IMR-90 (cell line): ENCODE measurements at regions of chr11 and their contacts with region 1.

Region 1: GRCh38 chr11:69670158-69670845 is 4.9 kb downstream of the LTO1 start:
- DNase-seq: peak; percentile 84
- ATAC-seq: peak; percentile 69
- H3K4me3 ChIP-seq: no peak overlapping the region
- H3K27ac ChIP-seq: no peak overlapping the region
- H3K4me1 ChIP-seq: peaks cover 7% of the 10 kb centered on the region
- H3K27me3 ChIP-seq: no peaks in the 10 kb centered on the region
- CTCF ChIP-seq: peak; percentile 94
- POLR2A ChIP-seq: peak; percentile 63
- RAD21 ChIP-seq: peak; percentile 94

Region 2: GRCh38 chr11:68946465-68947036 is 723.8 kb before region 1 on chr11:
- CTCF ChIA-PET with region 1: no interaction called
- POLR2A ChIA-PET with region 1: no interaction called
- dilution Hi-C with region 1: no loop called
- in situ Hi-C with region 1: loop called (anchors 25 kb)
- intact Hi-C with region 1: no loop called
- DNase-seq: peak; percentile 89
- ATAC-seq: peak; percentile 56
- H3K4me3 ChIP-seq: no peak overlapping the region
- H3K27ac ChIP-seq: peak overlapping the region; percentile 55; the same call in 1 of the 2 replicates
- H3K4me1 ChIP-seq: peaks cover 18% of the 10 kb centered on the region
- H3K27me3 ChIP-seq: no peaks in the 10 kb centered on the region; the same call in 1 of the 2 replicates
- CTCF ChIP-seq: no peak
- POLR2A ChIP-seq: no peak
- RAD21 ChIP-seq: no peak

Region 3: GRCh38 chr11:69321877-69322361 is 348.4 kb before region 1 on chr11:
- CTCF ChIA-PET with region 1: no interaction called
- POLR2A ChIA-PET with region 1: no interaction called
- dilution Hi-C with region 1: no loop called
- in situ Hi-C with region 1: no loop called
- intact Hi-C with region 1: no loop called
- DNase-seq: peak; percentile 96
- ATAC-seq: peak; percentile 74
- H3K4me3 ChIP-seq: no peak overlapping the region
- H3K27ac ChIP-seq: peak overlapping the region; percentile 79
- H3K4me1 ChIP-seq: peaks cover 24% of the 10 kb centered on the region
- H3K27me3 ChIP-seq: no peaks in the 10 kb centered on the region
- CTCF ChIP-seq: no peak
- POLR2A ChIP-seq: no peak; the same call in 1 of the 2 replicates
- RAD21 ChIP-seq: peak; percentile 31; the same call in 1 of the 2 replicates